ENCODE measurements at regions of chr11 and their contacts with region 1.

Region 1: DNA sequence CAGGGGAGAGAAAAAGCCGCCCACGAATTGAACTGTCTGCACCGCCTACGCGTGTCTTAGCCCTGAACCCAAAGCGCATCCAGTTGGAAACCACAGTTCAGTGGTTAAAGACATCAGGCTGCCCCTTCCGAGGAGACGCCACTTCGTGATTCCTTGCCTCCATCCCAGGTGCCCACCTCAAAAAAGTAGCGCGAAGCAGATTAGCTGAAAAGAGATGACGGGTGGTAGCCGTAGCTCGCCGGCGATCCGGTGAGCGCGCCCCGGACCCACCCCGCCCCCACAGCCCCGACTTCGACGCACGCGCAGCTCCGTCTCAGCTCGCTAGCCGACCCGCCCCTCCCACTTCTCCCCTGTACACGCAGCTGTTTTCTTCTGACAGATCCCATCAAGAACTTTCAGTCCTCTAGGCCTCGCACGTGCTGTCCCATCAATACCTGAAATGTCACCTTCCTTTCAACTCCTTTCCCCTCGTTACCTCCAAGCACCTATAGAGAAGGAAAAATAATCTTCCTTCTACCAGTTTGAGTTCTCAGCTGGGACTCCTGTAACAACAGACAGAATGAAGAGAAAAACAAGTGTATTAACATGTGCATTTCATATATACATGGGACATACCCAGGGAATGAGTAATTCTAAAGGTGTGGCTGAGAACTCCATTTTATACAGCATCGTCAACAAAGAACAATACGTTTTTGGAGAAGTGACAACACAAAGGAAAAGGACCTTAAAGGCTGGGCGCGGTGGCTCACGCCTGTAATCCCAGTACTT is 49.5 kb downstream of the OR4D9 start:
- DNase-seq: peak; percentile 67 to 90 (median 79)
- ATAC-seq: peak; percentile 70 to 75
- H3K4me3 Mint-ChIP-seq: peak overlapping the region; percentile 82 to 99 (median 92)
- H3K27ac Mint-ChIP-seq: peak overlapping the region; percentile 87 to 100 (median 95)
- H3K4me1 Mint-ChIP-seq: peaks cover 21 to 61% (median 51%) of the 10 kb centered on the region in 4 donors
- H3K27me3 Mint-ChIP-seq: peaks cover 0 to 3% (median 0%) of the 10 kb centered on the region in 5 donors

Region 2: DNA sequence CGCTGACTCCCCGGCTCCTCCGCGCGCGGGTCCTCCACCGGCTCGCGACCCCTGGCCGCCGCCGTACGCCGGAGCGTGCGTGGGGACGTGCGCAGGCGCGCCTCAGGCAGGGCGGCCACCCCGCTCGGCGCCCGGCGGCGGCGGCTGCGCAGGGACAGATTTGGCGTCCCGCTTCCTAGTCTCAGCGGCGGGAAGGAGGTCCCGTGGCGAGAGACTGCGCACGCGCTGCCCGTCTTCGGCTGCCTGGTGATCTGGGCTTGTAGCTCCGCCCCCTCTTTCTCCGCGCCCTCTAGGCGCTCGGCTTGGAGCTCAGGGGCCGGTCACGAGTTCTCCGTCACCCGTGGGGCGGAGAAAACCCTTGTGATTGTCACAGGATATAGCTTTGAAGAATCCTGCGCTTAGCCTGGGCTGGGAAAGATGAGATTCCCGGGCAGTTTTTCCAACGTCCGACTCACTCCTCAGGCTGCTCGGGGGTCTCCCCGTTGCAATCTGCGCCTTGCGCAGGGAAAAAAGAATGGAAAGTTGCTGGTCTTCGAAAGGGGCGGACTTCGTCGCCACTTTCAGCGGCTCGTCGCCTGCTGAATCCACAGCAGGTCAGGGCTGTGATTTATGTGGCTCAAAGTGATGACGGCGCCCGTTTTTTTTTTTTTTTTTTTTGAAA is 108.2 kb after region 1 on chr11 and contains the start of gene PATL1:
- POLR2A ChIA-PET with region 1: interaction called, 20 read pairs
- DNase-seq: peak; percentile 98 to 100 (median 99)
- ATAC-seq: peak; percentile 91
- H3K4me3 Mint-ChIP-seq: peak within 1 kb of the TSS; percentile 96 to 99 (median 97)
- H3K27ac Mint-ChIP-seq: peak within 1 kb of the TSS; percentile 96 to 100 (median 100)
- H3K4me1 Mint-ChIP-seq: peaks cover 18 to 44% (median 42%) of the 10 kb centered on the region in 4 donors
- H3K27me3 Mint-ChIP-seq: no peaks in the 10 kb centered on the region
- polyA plus RNA-seq, gene PATL1: 3.2 to 8.2 (median 3.8) TPM

Region 3: DNA sequence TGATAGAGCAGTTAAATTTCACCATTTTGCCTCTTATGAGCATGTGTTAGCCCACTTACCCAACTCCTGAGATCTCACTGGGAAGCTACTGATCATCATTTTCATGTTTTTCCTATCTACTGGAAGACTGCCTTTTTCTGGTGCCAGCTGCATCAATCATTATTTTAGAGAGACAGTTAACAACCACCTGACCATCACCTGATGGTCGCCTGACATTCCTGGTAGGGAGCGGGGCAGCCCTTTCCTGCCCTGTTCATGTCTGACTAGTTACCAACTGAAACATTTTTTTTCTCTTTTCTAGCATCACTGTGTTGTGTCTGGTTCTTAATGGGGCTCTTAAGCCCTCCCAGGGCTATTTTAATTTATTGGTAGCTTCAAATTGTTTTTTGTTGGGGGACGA is 128.1 kb after region 1 on chr11:
- POLR2A ChIA-PET with region 1: no interaction called
- DNase-seq: no peak
- ATAC-seq: no peak
- H3K4me3 Mint-ChIP-seq: no peak overlapping the region
- H3K27ac Mint-ChIP-seq: peak overlapping the region in 1 of 10 donors; percentile 35
- H3K4me1 Mint-ChIP-seq: peaks cover 0 to 5% (median under 1%) of the 10 kb centered on the region in 4 donors
- H3K27me3 Mint-ChIP-seq: peaks cover 10 to 47% (median 22%) of the 10 kb centered on the region in 5 donors

Measured in naive thymus-derived CD8-positive, alpha-beta T cell (primary cell).